ENCODE measurements at regions of chr2 and their contacts with region 1.

Region 1: GRCh38 chr2:69436938-69437750 is at the start of gene NFU1:
- DNase-seq: peak; percentile 98
- H3K4me3 ChIP-seq: peak within 1 kb of the TSS; percentile 77 to 92 (median 84)
- H3K27ac ChIP-seq: peak within 1 kb of the TSS; percentile 94 to 96 (median 94)
- H3K4me1 ChIP-seq: peaks cover 0 to 31% (median 22%) of the 10 kb centered on the region in 4 donors
- H3K27me3 ChIP-seq: no peaks in the 10 kb centered on the region
- CTCF ChIP-seq: peak; percentile 61 to 70 (median 65)
- EP300 ChIP-seq: peak in 1 of 4 donors; percentile 45
- POLR2A ChIP-seq: peak; percentile 54 to 71
- total RNA-seq, gene NFU1: 43.2 to 91.4 (median 74.2) TPM

Region 2: GRCh38 chr2:69386789-69387734 is 50.1 kb before region 1 on chr2 and contains the start of gene GFPT1:
- intact Hi-C with region 1: loop called (anchors 1 kb)
- DNase-seq: peak; percentile 96
- H3K4me3 ChIP-seq: peak within 1 kb of the TSS; percentile 78 to 99 (median 88)
- H3K27ac ChIP-seq: peak within 1 kb of the TSS; percentile 82 to 91 (median 88)
- H3K4me1 ChIP-seq: peaks cover 0 to 41% (median 21%) of the 10 kb centered on the region in 4 donors
- H3K27me3 ChIP-seq: no peaks in the 10 kb centered on the region
- CTCF ChIP-seq: no peak
- EP300 ChIP-seq: no peak
- POLR2A ChIP-seq: peak; percentile 16 to 28
- total RNA-seq, gene GFPT1: 14.5 to 24.4 (median 18.7) TPM

Region 3: GRCh38 chr2:69397234-69397633 is 39.9 kb before region 1 on chr2:
- intact Hi-C with region 1: no loop called
- DNase-seq: no peak
- H3K4me3 ChIP-seq: no peak overlapping the region
- H3K27ac ChIP-seq: no peak overlapping the region
- H3K4me1 ChIP-seq: no peaks in the 10 kb centered on the region
- H3K27me3 ChIP-seq: no peaks in the 10 kb centered on the region
- CTCF ChIP-seq: no peak
- EP300 ChIP-seq: no peak
- POLR2A ChIP-seq: no peak

Measured in sigmoid colon (tissue), 7 donors.